PC-9 (cell line): ENCODE measurements at regions of chr5 and their contacts with region 1.

Region 1: GRCh38 chr5:43120720-43121564 is at the start of gene ZNF131:
- DNase-seq: peak; percentile 95 to 100
- H3K4me3 ChIP-seq: peak within 1 kb of the TSS; percentile 73
- H3K27ac ChIP-seq: peak within 1 kb of the TSS; percentile 91
- H3K4me1 ChIP-seq: peaks cover 31% of the 10 kb centered on the region
- H3K27me3 ChIP-seq: no peaks in the 10 kb centered on the region
- CTCF ChIP-seq: no peak
- total RNA-seq, gene ZNF131: 79.5 and 82.4 TPM in 2 replicates

Region 2: GRCh38 chr5:41728276-41728675 is 1392.7 kb before region 1 on chr5:
- CTCF ChIA-PET with region 1: no interaction called
- POLR2A ChIA-PET with region 1: no interaction called
- intact Hi-C with region 1: no loop called
- DNase-seq: no peak
- H3K4me3 ChIP-seq: no peak overlapping the region
- H3K27ac ChIP-seq: no peak overlapping the region
- H3K4me1 ChIP-seq: no peaks in the 10 kb centered on the region
- H3K27me3 ChIP-seq: no peaks in the 10 kb centered on the region
- CTCF ChIP-seq: no peak

Region 3: GRCh38 chr5:41903892-41904799 is 1216.8 kb before region 1 on chr5 and contains the start of gene RIMOC1:
- CTCF ChIA-PET with region 1: no interaction called
- POLR2A ChIA-PET with region 1: no interaction called
- intact Hi-C with region 1: loop called (anchors 10 kb)
- DNase-seq: peak; percentile 99 to 100
- H3K4me3 ChIP-seq: peak within 1 kb of the TSS; percentile 83
- H3K27ac ChIP-seq: peak within 1 kb of the TSS; percentile 68
- H3K4me1 ChIP-seq: peaks cover 16% of the 10 kb centered on the region
- H3K27me3 ChIP-seq: no peaks in the 10 kb centered on the region
- CTCF ChIP-seq: no peak
- total RNA-seq, gene RIMOC1: 40.1 and 68.6 TPM in 2 replicates

Region 4: DNA sequence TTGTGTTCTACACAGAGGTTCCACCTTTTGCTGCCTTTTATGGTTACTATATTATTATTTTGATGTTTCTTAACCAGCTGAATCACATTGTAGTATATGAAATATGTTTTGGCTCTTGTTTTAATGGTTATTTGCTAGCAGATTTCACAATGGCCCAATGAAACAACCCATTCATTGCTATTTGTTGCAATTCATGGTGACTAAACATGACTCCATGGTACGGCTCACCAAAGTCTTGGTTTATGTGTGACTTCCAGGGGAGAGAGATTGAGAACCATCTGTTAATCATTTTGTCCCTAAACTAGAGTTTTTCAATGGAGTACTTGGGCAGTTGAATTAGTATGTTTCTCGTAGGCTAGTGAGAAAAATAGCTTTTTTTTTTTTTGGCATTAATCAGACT is 589.3 kb before region 1 on chr5:
- CTCF ChIA-PET with region 1: no interaction called
- POLR2A ChIA-PET with region 1: no interaction called
- intact Hi-C with region 1: no loop called
- DNase-seq: no peak
- H3K4me3 ChIP-seq: no peak overlapping the region
- H3K27ac ChIP-seq: no peak overlapping the region
- H3K4me1 ChIP-seq: no peaks in the 10 kb centered on the region
- H3K27me3 ChIP-seq: no peaks in the 10 kb centered on the region
- CTCF ChIP-seq: no peak

Region 5: GRCh38 chr5:42950440-42951292 is 170.3 kb before region 1 on chr5:
- CTCF ChIA-PET with region 1: interaction called, 3 read pairs
- POLR2A ChIA-PET with region 1: interaction called, 13 read pairs
- intact Hi-C with region 1: loop called (anchors 1 kb)
- DNase-seq: peak; percentile 97 to 100
- H3K4me3 ChIP-seq: peak overlapping the region; percentile 55
- H3K27ac ChIP-seq: peak overlapping the region; percentile 96
- H3K4me1 ChIP-seq: peaks cover 28% of the 10 kb centered on the region
- H3K27me3 ChIP-seq: no peaks in the 10 kb centered on the region
- CTCF ChIP-seq: no peak

Region 6: GRCh38 chr5:43040287-43041098 is 80.4 kb before region 1 on chr5 and contains the start of gene ANXA2R:
- CTCF ChIA-PET with region 1: no interaction called
- POLR2A ChIA-PET with region 1: interaction called, 8 read pairs
- intact Hi-C with region 1: loop called (anchors 1 kb)
- DNase-seq: peak; percentile 94 to 97
- H3K4me3 ChIP-seq: peak within 1 kb of the TSS; percentile 76
- H3K27ac ChIP-seq: peak within 1 kb of the TSS; percentile 60
- H3K4me1 ChIP-seq: peaks cover 1% of the 10 kb centered on the region; the same call in 1 of the 2 replicates
- H3K27me3 ChIP-seq: no peaks in the 10 kb centered on the region
- CTCF ChIP-seq: peak; percentile 99
- total RNA-seq, gene ANXA2R: 3.6 and 6.3 TPM in 2 replicates

Region 7: DNA sequence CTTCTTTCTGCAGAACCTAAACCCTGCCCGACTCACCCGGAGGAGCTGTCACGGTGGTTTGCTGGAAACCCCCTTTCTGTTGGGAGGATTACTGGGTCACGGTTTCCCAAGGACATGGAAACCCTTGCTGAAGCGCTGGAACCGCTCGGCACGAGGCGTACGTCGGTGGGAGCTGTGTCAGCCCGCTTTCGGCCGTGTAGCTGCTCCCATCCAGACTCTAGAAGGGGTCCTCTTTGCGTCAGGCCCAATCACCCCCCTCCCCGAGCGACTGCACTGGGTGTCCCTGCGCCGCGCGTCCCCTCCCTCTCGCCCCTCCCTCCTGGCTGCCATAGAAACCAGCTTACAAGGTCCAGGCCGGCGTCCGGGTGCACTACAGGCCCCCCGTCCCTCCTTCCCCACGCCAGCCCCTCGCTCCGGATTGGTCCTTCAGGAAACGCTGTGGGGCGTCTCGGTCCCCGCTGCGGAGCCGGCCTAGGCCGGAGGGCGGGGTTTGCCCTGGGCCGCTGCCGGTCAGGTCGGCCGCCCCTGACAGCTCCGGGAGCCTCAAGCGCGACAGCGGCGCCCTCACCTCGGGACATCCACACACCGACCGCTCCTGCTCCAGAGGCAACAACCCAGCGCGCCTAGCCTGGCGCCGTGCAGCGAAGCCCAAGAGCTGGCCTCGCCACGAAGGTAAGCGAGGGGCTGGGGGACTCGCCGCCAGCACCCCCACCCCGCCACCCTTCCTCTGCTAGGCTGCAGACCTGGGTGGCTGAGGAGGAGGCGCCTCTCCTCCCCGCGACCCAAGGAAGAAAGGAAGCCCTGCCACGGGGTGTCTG is 71.0 kb after region 1 on chr5 and contains the start of gene NIM1K:
- CTCF ChIA-PET with region 1: no interaction called
- POLR2A ChIA-PET with region 1: interaction called, 10 read pairs
- intact Hi-C with region 1: no loop called
- DNase-seq: peak in 1 of 2 experiments; percentile 55
- H3K4me3 ChIP-seq: peak within 1 kb of the TSS; percentile 48
- H3K27ac ChIP-seq: no peak within 1 kb of the TSS
- H3K4me1 ChIP-seq: peaks cover 18% of the 10 kb centered on the region
- H3K27me3 ChIP-seq: 0 out of 2 replicates have a peak, but pooled peaks cover 4% of the 10 kb centered on the region
- CTCF ChIP-seq: no peak
- total RNA-seq, gene NIM1K: 0.26 and 0.45 TPM in 2 replicates

Region 8: GRCh38 chr5:43432473-43433365 is 311.8 kb after region 1 on chr5:
- CTCF ChIA-PET with region 1: no interaction called
- POLR2A ChIA-PET with region 1: no interaction called
- intact Hi-C with region 1: loop called (anchors 5 kb)
- DNase-seq: peak; percentile 98 to 99
- H3K4me3 ChIP-seq: no peak overlapping the region
- H3K27ac ChIP-seq: peak overlapping the region; percentile 69
- H3K4me1 ChIP-seq: peaks cover 45% of the 10 kb centered on the region
- H3K27me3 ChIP-seq: no peaks in the 10 kb centered on the region
- CTCF ChIP-seq: no peak